ENCODE measurements at regions of chr11 and their contacts with region 1.

Region 1: GRCh38 chr11:44911029-44911814 is 39.5 kb downstream of the TP53I11 start:
- H3K4me3 Mint-ChIP-seq: no peak overlapping the region
- H3K27ac Mint-ChIP-seq: no peak overlapping the region
- H3K4me1 Mint-ChIP-seq: peaks cover 24% of the 10 kb centered on the region
- H3K27me3 Mint-ChIP-seq: peaks cover 37% of the 10 kb centered on the region

Region 2: DNA sequence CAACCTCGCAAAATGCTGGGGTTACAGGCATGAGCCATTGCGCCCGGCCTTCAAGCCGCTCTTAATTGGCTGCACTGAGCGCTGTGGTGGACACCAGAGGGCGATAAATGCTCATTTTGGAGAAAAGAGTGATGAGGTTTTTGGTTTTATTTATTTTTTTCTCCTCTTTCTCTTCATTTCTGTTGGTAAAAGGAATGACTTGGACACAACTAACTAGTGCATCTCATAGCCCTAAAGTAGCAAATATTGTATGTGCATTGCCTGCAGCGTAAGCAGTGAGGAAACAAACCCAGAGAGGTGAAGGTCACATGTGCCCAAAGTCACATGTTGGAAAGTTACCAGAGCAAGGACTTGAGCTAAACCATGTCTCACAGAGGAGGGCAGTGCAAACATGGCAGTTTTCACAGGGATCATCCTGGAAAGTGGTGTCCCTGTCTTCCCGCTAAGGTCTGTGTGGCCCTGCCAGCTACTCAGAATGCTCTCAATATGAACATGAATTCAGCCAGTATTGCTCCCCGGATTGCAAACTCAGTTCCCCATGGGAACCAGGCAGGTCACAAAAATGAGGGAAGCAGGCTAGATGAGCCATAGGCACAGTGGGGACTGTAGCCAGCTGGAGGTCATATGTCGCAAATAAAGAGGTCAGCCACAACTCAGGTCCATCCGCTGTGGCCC is 354.4 kb before region 1 on chr11:
- intact Hi-C with region 1: loop called (anchors 5 kb)
- H3K4me3 Mint-ChIP-seq: no peak overlapping the region
- H3K27ac Mint-ChIP-seq: no peak overlapping the region
- H3K4me1 Mint-ChIP-seq: peaks cover 35% of the 10 kb centered on the region
- H3K27me3 Mint-ChIP-seq: peaks cover 6% of the 10 kb centered on the region

Region 3: DNA sequence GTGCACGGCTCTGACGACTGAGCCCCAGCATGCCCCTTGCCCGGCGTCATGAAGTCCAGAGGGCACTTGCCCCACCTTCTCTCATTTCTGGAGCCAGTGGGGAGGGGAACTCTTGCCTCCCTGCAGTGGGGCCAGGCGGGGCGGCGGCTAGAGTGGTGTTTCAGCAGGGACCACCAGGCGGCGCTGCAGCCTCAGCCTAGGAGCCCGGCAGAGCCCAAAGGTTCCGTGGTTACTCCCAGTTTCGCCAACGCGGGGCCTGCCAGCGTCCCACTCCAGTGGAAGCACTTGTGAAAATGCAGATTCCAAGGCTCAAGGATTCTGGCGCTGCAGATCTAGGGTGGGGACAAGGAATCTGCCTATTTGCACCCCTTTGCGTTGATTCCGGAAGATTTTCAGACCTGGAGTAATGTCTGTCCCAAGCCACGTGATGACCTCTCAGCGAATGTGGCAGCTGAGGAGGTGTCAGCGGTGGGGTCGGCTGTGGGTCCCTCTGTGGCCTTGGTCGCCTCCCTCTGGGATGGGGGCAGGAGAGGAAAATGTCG is 290.0 kb before region 1 on chr11:
- intact Hi-C with region 1: loop called (anchors 1 kb)
- H3K4me3 Mint-ChIP-seq: no peak overlapping the region
- H3K27ac Mint-ChIP-seq: no peak overlapping the region
- H3K4me1 Mint-ChIP-seq: peaks cover 28% of the 10 kb centered on the region
- H3K27me3 Mint-ChIP-seq: peaks cover 19% of the 10 kb centered on the region

Region 4: GRCh38 chr11:44727373-44728287 is 183.6 kb before region 1 on chr11:
- intact Hi-C with region 1: loop called (anchors 1 kb)
- H3K4me3 Mint-ChIP-seq: peak overlapping the region; percentile 68
- H3K27ac Mint-ChIP-seq: no peak overlapping the region
- H3K4me1 Mint-ChIP-seq: peaks cover 13% of the 10 kb centered on the region
- H3K27me3 Mint-ChIP-seq: peaks cover 68% of the 10 kb centered on the region

Region 5: DNA sequence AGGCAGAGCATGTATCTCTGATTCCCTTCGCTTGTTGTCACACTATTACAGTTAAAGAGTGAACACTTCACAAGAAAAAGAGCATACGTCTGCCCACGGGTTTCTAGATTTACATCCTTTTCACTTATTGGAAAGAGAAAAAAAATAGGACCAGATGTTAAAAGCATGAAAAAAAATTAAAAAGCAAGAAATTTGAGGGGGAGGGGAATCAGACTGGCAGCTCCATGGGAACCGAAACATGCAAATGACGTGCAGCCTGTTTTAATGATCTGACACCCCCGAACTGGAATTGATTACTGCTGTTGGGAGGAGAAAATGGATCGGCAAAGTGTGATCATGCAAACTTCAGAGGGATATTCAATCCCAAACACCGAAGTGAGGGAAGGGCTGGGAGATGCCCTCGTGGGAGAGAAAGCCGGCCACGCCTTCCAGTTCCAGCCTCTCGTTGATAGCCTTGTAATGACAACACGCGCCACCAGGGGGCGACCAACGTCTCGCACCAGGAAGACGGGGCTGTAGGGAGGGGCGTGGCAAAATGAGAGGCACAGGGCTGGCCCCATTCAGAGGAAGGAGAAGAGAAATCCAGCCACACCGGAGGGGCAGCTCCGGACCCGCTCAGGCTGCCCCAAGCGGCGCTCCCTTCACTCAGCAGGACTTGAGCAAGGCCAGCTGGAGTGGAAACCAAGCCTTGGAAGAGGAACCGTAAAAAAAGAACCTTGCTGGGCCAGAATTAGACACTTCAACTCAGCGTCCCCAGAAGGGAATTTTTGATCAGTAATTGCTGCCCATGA is 428.7 kb after region 1 on chr11:
- intact Hi-C with region 1: loop called (anchors 10 kb)
- H3K4me3 Mint-ChIP-seq: peak overlapping the region; percentile 64
- H3K27ac Mint-ChIP-seq: peak overlapping the region; percentile 41
- H3K4me1 Mint-ChIP-seq: peaks cover 10% of the 10 kb centered on the region
- H3K27me3 Mint-ChIP-seq: peaks cover 17% of the 10 kb centered on the region